ENCODE measurements at regions of chr2 and their contacts with region 1.

Region 1: DNA sequence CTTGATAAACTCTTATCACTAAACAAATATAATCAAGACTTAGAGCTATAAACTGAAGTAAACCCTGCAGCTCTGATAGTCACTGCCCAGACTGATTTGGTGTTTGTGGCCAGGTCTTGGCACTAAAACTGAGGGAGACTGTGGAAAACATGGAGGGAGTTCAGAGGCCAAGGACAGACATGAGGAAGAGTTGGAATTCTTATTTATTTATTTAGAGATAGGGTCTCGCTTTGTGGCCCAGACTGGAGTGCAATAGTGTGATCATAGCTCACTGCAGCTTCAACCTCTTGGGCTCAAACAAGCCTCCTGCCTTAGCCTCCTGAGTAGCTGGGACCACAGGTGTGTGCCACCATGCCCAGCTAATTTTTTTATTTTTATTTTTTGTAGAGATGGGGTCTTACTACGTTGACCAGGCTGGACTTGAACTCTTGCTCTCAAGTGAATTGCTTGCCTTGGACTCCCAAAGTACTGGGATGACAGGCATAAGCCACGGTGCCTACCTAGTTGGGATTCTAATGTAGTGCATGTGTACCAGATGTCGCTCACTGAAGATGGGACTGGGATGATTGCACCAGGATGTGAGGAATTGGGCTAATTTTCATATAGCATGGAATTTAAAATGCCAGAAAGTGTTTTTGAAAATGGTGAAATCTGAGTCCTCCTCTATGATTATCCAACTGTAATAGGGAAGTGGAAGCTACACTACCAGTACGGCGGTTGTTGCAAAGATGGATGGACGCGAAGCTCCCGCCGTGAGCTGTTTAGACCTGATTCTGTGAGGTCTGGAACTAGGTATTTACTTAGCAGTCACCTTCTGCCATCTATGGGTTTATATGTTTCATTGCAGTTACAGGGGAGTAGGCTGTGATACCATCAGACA is 52.7 kb upstream of the CTLA4 start:
- DNase-seq: peak; percentile 79 to 90 (median 84)
- H3K4me3 ChIP-seq: peak overlapping the region in 1 of 3 experiments; percentile 26
- H3K4me3 Mint-ChIP-seq: peak overlapping the region; percentile 45 to 67
- H3K27ac ChIP-seq: no peak overlapping the region
- H3K27ac Mint-ChIP-seq: peak overlapping the region; percentile 18 to 74 (median 73)
- H3K4me1 ChIP-seq: peaks cover 57 to 69% of the 10 kb centered on the region in 2 donors
- H3K4me1 Mint-ChIP-seq: peaks cover 69% of the 10 kb centered on the region
- H3K27me3 ChIP-seq: no peaks in the 10 kb centered on the region
- H3K27me3 Mint-ChIP-seq: peaks cover 0 to 9% (median 4%) of the 10 kb centered on the region in 3 donors
- CTCF ChIP-seq: peak; percentile 83

Region 2: DNA sequence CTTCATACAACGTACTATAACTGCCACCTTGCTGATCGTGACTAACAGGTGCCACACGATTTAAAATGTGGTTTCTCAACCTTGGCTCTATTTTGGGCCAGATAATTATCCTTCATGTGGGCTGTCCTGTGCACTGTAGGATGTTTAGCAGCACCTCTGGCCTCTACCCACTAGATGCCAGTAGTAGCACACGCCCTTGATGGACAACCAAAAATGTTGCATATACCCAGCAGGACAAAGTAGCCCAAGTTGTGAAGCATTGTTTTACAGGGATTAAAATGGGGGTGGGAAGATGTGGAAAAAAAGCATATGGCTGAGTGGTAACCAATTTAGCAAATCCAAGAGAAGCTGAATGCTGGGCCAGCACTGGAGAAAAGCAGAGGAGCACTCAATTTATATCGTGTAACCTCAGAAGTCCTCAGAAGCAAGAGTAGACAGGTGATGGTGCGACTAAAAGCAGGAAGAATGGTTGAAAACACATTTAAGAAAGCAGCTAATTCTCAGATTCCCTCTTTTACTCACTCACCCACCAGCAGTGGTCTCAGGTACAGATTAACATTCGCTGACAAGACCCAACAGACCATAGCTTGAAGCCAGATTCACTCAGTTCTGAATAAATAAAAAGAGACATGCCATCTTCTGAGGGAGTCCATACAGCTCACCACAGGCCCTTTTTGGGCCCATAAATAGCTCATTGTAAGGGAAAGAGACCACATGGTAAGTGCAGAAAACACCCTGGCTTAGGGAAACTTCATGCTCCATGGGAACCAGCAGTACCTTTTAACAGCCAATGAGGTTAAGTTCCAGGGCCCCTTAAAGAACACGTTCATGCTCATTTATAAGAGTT is 330.4 kb before region 1 on chr2:
- intact Hi-C with region 1: loop called (anchors 5 kb)
- DNase-seq: peak; percentile 41 to 68 (median 63)
- H3K4me3 ChIP-seq: no peak overlapping the region
- H3K4me3 Mint-ChIP-seq: no peak overlapping the region
- H3K27ac ChIP-seq: no peak overlapping the region
- H3K27ac Mint-ChIP-seq: peak overlapping the region in 1 of 7 donors; percentile 14
- H3K4me1 ChIP-seq: no peaks in the 10 kb centered on the region
- H3K4me1 Mint-ChIP-seq: peaks cover 2% of the 10 kb centered on the region
- H3K27me3 ChIP-seq: no peaks in the 10 kb centered on the region
- H3K27me3 Mint-ChIP-seq: peaks cover 0 to 1% (median 1%) of the 10 kb centered on the region in 3 donors
- CTCF ChIP-seq: peak; percentile 82

Region 3: DNA sequence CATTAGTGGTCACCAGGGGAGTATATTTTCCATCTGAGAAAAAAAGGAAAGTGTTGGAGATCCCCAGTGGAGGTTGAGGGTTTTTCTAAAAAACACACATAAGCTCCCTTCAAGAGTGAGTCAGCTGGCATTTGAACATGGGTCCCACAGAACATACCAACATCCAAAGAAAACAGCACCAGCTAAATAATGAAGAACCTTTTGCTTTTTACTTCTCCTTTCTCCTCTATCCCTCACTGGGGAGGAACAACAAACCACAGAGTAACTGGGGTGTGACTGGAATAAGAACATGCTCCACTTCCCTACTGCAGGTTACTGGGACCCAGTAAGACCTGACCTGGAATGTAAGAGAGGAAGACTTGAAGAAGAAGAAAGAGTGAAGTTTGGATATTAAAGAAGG is 223.3 kb before region 1 on chr2:
- intact Hi-C with region 1: no loop called
- DNase-seq: peak; percentile 43 to 66 (median 54)
- H3K4me3 ChIP-seq: no peak overlapping the region
- H3K4me3 Mint-ChIP-seq: no peak overlapping the region
- H3K27ac ChIP-seq: no peak overlapping the region
- H3K27ac Mint-ChIP-seq: peak overlapping the region in 3 of 7 donors; percentile 14 to 67 (median 34)
- H3K4me1 ChIP-seq: peaks cover 11 to 15% of the 10 kb centered on the region in 2 donors
- H3K4me1 Mint-ChIP-seq: peaks cover 15% of the 10 kb centered on the region
- H3K27me3 ChIP-seq: no peaks in the 10 kb centered on the region
- H3K27me3 Mint-ChIP-seq: peaks cover 8 to 10% (median 8%) of the 10 kb centered on the region in 3 donors
- CTCF ChIP-seq: no peak

Region 4: GRCh38 chr2:203928849-203929248 is 113.9 kb after region 1 on chr2:
- intact Hi-C with region 1: no loop called
- DNase-seq: no peak
- H3K4me3 ChIP-seq: no peak overlapping the region
- H3K4me3 Mint-ChIP-seq: no peak overlapping the region
- H3K27ac ChIP-seq: no peak overlapping the region
- H3K27ac Mint-ChIP-seq: no peak overlapping the region
- H3K4me1 ChIP-seq: no peaks in the 10 kb centered on the region
- H3K4me1 Mint-ChIP-seq: peaks cover 2% of the 10 kb centered on the region
- H3K27me3 ChIP-seq: no peaks in the 10 kb centered on the region
- H3K27me3 Mint-ChIP-seq: peaks cover 0 to 4% (median 0%) of the 10 kb centered on the region in 3 donors
- CTCF ChIP-seq: peak; percentile 20

Measured in CD14-positive monocyte (primary cell).